ENCODE measurements at regions of chr19 and their contacts with region 1.

Region 1: GRCh38 chr19:21474671-21475181 is 30.7 kb upstream of the ZNF429 start:
- DNase-seq: peak; percentile 93
- ATAC-seq: peak; percentile 100
- H3K4me3 Mint-ChIP-seq: peak overlapping the region; percentile 77
- H3K27ac Mint-ChIP-seq: peak overlapping the region; percentile 65
- H3K4me1 Mint-ChIP-seq: no peaks in the 10 kb centered on the region
- H3K27me3 Mint-ChIP-seq: no peaks in the 10 kb centered on the region

Region 2: GRCh38 chr19:21463449-21464105 is 11.1 kb before region 1 on chr19:
- CTCF ChIA-PET with region 1: no interaction called
- POLR2A ChIA-PET with region 1: interaction called, 10 read pairs
- intact Hi-C with region 1: no loop called
- DNase-seq: peak; percentile 77
- ATAC-seq: peak; percentile 99
- H3K4me3 Mint-ChIP-seq: peak overlapping the region; percentile 82
- H3K27ac Mint-ChIP-seq: peak overlapping the region; percentile 82
- H3K4me1 Mint-ChIP-seq: peaks cover 3% of the 10 kb centered on the region
- H3K27me3 Mint-ChIP-seq: peaks cover 10% of the 10 kb centered on the region

Measured in activated CD4-positive, alpha-beta T cell treated with anti-CD3 and anti-CD28 coated beads for 36 hours (primary cell).